Activated naive CD4-positive, alpha-beta T cell treated with anti-CD3 and anti-CD28 coated beads for 36 hours (primary cell): ENCODE measurements at regions of chr1 and their contacts with region 1.

Region 1: GRCh38 chr1:209860293-209860881 is 32.6 kb downstream of the UTP25 start:
- DNase-seq: peak; percentile 83
- H3K4me3 Mint-ChIP-seq: no peak overlapping the region
- H3K27ac Mint-ChIP-seq: no peak overlapping the region
- H3K4me1 Mint-ChIP-seq: no peaks in the 10 kb centered on the region
- H3K27me3 Mint-ChIP-seq: peaks cover 4% of the 10 kb centered on the region

Region 2: GRCh38 chr1:209926045-209926444 is 65.7 kb after region 1 on chr1:
- CTCF ChIA-PET with region 1: no interaction called
- intact Hi-C with region 1: no loop called
- DNase-seq: no peak
- H3K4me3 Mint-ChIP-seq: no peak overlapping the region
- H3K27ac Mint-ChIP-seq: no peak overlapping the region
- H3K4me1 Mint-ChIP-seq: no peaks in the 10 kb centered on the region
- H3K27me3 Mint-ChIP-seq: peaks cover 12% of the 10 kb centered on the region

Region 3: GRCh38 chr1:209989525-209989924 is 129.1 kb after region 1 on chr1:
- CTCF ChIA-PET with region 1: interaction called, 11 read pairs
- intact Hi-C with region 1: loop called (anchors 1 kb)
- DNase-seq: no peak
- H3K4me3 Mint-ChIP-seq: no peak overlapping the region
- H3K27ac Mint-ChIP-seq: no peak overlapping the region
- H3K4me1 Mint-ChIP-seq: no peaks in the 10 kb centered on the region
- H3K27me3 Mint-ChIP-seq: peaks cover 15% of the 10 kb centered on the region

Region 4: DNA sequence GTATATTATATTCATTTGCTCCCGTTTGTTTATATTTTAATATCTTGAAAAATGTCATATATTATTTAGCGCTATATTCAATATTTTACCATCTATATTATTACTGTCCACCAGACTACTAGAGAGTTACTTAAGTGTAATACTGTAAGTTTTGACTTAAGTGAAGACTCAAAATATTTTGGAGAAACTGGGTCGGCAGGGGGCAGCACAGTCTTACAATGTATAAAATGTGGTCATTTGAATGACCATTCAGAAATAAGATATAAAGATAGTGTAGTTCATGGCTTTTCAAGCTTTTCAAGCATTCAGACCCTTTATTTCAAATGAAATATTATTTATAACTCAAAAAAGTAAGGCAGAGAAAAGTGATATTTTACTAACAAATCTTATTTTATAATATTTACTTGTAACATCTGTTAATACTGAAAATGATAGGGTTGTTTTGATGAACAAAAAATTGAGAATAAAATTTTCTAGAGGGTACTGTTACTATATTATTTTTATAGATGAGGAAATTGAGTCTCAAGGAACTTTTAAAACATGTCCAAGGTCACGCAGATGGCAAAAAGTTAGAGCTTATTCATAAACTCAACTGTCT is 283.2 kb after region 1 on chr1:
- CTCF ChIA-PET with region 1: no interaction called
- intact Hi-C with region 1: loop called (anchors 2 kb)
- DNase-seq: peak; percentile 77
- H3K4me3 Mint-ChIP-seq: no peak overlapping the region
- H3K27ac Mint-ChIP-seq: no peak overlapping the region
- H3K4me1 Mint-ChIP-seq: no peaks in the 10 kb centered on the region
- H3K27me3 Mint-ChIP-seq: peaks cover 13% of the 10 kb centered on the region